B cell (primary cell): ENCODE measurements at regions of chr17 and their contacts with region 1.

Region 1: DNA sequence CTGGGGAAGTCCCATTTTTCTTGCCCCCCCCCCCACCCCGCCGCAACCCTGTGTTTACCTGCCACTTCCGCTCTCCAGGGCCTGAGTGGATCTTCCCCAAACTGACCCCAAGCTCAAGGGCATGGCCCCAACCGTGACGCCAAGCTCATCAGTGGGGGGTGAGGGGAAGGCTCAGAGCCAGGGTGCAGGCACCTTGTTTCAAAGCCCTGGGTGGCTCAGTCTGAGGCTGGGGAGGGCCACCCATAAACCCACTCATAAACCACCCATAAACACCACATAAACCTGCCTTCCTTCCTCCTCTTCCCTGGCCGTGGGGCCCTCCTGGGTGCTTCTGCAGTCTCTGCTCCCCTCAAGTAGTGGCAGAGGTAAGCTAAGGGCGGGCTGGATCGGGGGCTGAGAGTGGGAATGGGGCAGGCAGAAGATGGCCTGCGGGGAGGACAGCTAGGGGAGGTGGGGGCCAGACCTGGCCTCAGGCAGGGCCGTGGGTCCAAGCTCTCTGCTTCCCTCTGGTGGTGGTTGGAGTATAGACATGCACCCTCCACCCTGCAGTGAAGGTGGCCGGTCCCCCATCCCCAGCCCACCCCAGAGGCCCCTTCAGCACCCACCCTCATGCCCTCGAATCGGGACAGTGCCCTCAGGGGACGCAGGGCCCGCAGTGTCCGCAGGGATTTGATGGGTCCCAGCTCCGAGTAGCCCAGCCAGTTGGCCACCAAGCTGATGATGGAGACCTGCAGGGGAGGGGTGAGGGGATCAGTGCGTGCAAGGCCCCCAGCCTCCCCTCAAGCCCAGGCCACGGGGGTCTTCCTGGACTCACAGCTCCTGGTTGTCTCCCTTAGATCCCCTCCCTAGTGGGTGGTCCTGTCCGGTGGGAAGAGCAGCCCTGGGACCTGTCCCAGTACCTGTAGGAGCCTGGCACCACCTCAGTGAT is 14.6 kb upstream of the CD79B start:
- DNase-seq: peak; percentile 87
- ATAC-seq: peak; percentile 70
- H3K4me3 ChIP-seq: peak overlapping the region; percentile 20 to 59 (median 41)
- H3K4me3 Mint-ChIP-seq: peak overlapping the region; percentile 89
- H3K27ac ChIP-seq: peak overlapping the region; percentile 72 to 84
- H3K27ac Mint-ChIP-seq: peak overlapping the region; percentile 99
- H3K4me1 ChIP-seq: peaks cover 35 to 70% of the 10 kb centered on the region in 2 donors
- H3K4me1 Mint-ChIP-seq: peaks cover 46% of the 10 kb centered on the region
- H3K27me3 ChIP-seq: no peaks in the 10 kb centered on the region
- H3K27me3 Mint-ChIP-seq: no peaks in the 10 kb centered on the region
- CTCF ChIP-seq: peak; percentile 92

Region 2: GRCh38 chr17:63798572-63799106 is 148.1 kb before region 1 on chr17:
- CTCF ChIA-PET with region 1: no interaction called
- POLR2A ChIA-PET with region 1: no interaction called
- intact Hi-C with region 1: no loop called
- DNase-seq: no peak
- ATAC-seq: no peak
- H3K4me3 ChIP-seq: no peak overlapping the region
- H3K4me3 Mint-ChIP-seq: no peak overlapping the region
- H3K27ac ChIP-seq: no peak overlapping the region
- H3K27ac Mint-ChIP-seq: no peak overlapping the region
- H3K4me1 ChIP-seq: no peaks in the 10 kb centered on the region
- H3K4me1 Mint-ChIP-seq: no peaks in the 10 kb centered on the region
- H3K27me3 ChIP-seq: no peaks in the 10 kb centered on the region
- H3K27me3 Mint-ChIP-seq: no peaks in the 10 kb centered on the region
- CTCF ChIP-seq: no peak

Region 3: DNA sequence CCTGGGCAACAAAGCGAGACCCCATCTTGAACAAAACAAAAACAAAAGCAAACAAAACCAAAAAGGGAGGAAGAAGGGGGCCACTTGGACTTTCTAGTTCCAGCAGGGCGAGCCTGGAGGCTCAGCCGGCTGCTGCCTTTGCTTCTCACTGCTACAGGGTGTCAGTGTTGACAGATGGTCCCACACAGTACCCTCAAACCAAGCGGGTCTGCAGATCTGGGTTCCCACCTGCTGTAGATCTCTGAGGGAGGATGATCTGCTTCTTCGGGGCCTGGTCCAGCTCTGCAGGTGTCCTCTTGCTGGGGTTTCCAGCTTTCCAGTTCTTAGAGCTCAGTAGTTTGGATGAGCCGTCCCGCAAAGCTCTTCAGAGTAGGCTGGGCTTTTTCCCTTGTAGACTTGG is 42.4 kb before region 1 on chr17:
- CTCF ChIA-PET with region 1: interaction called, 70 read pairs
- POLR2A ChIA-PET with region 1: no interaction called
- intact Hi-C with region 1: no loop called
- DNase-seq: no peak
- ATAC-seq: no peak
- H3K4me3 ChIP-seq: no peak overlapping the region
- H3K4me3 Mint-ChIP-seq: no peak overlapping the region
- H3K27ac ChIP-seq: no peak overlapping the region
- H3K27ac Mint-ChIP-seq: no peak overlapping the region
- H3K4me1 ChIP-seq: no peaks in the 10 kb centered on the region
- H3K4me1 Mint-ChIP-seq: peaks cover 4% of the 10 kb centered on the region
- H3K27me3 ChIP-seq: no peaks in the 10 kb centered on the region
- H3K27me3 Mint-ChIP-seq: peaks cover 8% of the 10 kb centered on the region
- CTCF ChIP-seq: no peak

Region 4: DNA sequence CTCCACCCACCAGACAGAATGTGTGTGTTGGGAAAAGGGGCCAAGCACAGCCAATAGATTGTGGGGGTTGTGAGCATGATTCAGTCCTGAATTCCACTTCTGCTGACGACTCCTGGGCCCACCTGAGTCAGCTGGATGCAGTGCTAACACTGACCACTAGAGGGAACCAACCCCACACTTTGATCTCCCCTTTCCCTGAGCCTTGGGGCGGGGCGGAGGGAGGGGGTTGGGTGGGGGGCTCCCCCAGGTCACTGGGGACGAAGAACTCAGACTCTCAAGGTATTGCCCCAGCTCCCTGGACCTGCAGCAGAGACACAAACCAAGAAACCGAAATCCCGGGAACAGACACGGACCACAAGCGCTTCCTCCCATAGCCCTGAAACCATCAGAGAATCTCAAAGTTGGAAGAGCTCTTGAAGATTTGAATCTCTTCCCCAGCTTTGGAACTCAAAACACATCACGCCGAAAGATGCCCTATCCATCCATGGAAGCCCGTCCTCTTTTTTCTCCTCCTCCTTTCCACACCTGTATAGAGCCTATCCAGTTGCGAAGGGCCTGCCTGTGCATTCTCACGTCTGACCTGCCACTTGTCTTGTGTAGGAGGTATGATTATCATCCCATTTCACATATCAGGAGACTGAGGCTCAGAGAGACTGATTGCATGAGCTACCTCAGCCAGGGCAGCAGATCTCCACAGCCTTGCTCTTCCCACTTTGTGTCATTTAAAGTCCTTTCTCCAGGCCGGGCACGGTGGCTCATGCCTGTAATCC is 34.9 kb before region 1 on chr17:
- CTCF ChIA-PET with region 1: interaction called, 834 read pairs
- POLR2A ChIA-PET with region 1: interaction called, 21 read pairs
- intact Hi-C with region 1: no loop called
- DNase-seq: peak; percentile 77
- ATAC-seq: peak; percentile 55
- H3K4me3 ChIP-seq: no peak overlapping the region
- H3K4me3 Mint-ChIP-seq: no peak overlapping the region
- H3K27ac ChIP-seq: no peak overlapping the region
- H3K27ac Mint-ChIP-seq: peak overlapping the region; percentile 50
- H3K4me1 ChIP-seq: peaks cover 28 to 41% of the 10 kb centered on the region in 2 donors
- H3K4me1 Mint-ChIP-seq: peaks cover 41% of the 10 kb centered on the region
- H3K27me3 ChIP-seq: peaks cover 0 to 5% (median 0%) of the 10 kb centered on the region in 4 experiments
- H3K27me3 Mint-ChIP-seq: peaks cover 8% of the 10 kb centered on the region
- CTCF ChIP-seq: peak; percentile 82

Region 5: DNA sequence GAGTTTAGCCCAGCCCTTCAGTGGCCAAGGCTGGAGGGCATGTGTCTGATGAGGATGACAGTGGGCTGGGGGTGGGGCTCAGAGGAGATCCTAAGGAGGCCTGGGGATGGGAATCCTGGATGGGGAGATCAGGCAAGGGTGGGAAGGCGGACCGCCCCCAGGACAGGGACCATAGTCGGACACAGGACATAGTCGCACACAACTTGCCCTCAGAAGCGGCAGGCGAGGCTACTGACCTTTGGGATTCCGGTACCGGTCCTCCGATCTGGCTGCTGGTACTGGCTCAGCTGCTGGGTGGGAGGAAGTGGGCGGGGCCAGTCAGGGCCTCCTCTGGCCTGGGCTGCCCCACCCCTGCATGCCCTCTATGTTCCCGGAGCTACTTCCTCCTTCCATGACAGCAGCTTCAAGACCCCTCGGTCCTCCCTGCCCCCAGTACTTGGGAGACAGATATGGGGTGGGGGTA is 15.6 kb before region 1 on chr17:
- CTCF ChIA-PET with region 1: interaction called, 834 read pairs
- POLR2A ChIA-PET with region 1: interaction called, 360 read pairs
- intact Hi-C with region 1: loop called (anchors 1 kb)
- DNase-seq: peak; percentile 77
- ATAC-seq: peak; percentile 39
- H3K4me3 ChIP-seq: peak overlapping the region; percentile 80 to 100 (median 97)
- H3K4me3 Mint-ChIP-seq: peak overlapping the region; percentile 99
- H3K27ac ChIP-seq: peak overlapping the region; percentile 83 to 85
- H3K27ac Mint-ChIP-seq: peak overlapping the region; percentile 97
- H3K4me1 ChIP-seq: peaks cover 72 to 85% of the 10 kb centered on the region in 2 donors
- H3K4me1 Mint-ChIP-seq: peaks cover 86% of the 10 kb centered on the region
- H3K27me3 ChIP-seq: no peaks in the 10 kb centered on the region
- H3K27me3 Mint-ChIP-seq: no peaks in the 10 kb centered on the region
- CTCF ChIP-seq: no peak

Region 6: GRCh38 chr17:63966646-63967264 is 20.1 kb after region 1 on chr17:
- CTCF ChIA-PET with region 1: interaction called, 14 read pairs
- POLR2A ChIA-PET with region 1: no interaction called
- intact Hi-C with region 1: no loop called
- DNase-seq: no peak
- ATAC-seq: no peak
- H3K4me3 ChIP-seq: no peak overlapping the region
- H3K4me3 Mint-ChIP-seq: no peak overlapping the region
- H3K27ac ChIP-seq: no peak overlapping the region
- H3K27ac Mint-ChIP-seq: no peak overlapping the region
- H3K4me1 ChIP-seq: peaks cover 5 to 12% of the 10 kb centered on the region in 2 donors
- H3K4me1 Mint-ChIP-seq: peaks cover 14% of the 10 kb centered on the region
- H3K27me3 ChIP-seq: peaks cover 0 to 2% (median 0%) of the 10 kb centered on the region in 4 experiments
- H3K27me3 Mint-ChIP-seq: no peaks in the 10 kb centered on the region
- CTCF ChIP-seq: no peak

Region 7: GRCh38 chr17:63984651-63985386 is 38.1 kb after region 1 on chr17:
- CTCF ChIA-PET with region 1: interaction called, 35 read pairs
- POLR2A ChIA-PET with region 1: no interaction called
- intact Hi-C with region 1: loop called (anchors 1 kb)
- DNase-seq: no peak
- ATAC-seq: peak; percentile 80
- H3K4me3 ChIP-seq: no peak overlapping the region
- H3K4me3 Mint-ChIP-seq: no peak overlapping the region
- H3K27ac ChIP-seq: no peak overlapping the region
- H3K27ac Mint-ChIP-seq: no peak overlapping the region
- H3K4me1 ChIP-seq: peaks cover 8 to 17% of the 10 kb centered on the region in 2 donors
- H3K4me1 Mint-ChIP-seq: peaks cover 19% of the 10 kb centered on the region
- H3K27me3 ChIP-seq: no peaks in the 10 kb centered on the region
- H3K27me3 Mint-ChIP-seq: no peaks in the 10 kb centered on the region
- CTCF ChIP-seq: no peak